IMR-90 (cell line): ENCODE measurements at regions of chr7 and their contacts with region 1.

Region 1: DNA sequence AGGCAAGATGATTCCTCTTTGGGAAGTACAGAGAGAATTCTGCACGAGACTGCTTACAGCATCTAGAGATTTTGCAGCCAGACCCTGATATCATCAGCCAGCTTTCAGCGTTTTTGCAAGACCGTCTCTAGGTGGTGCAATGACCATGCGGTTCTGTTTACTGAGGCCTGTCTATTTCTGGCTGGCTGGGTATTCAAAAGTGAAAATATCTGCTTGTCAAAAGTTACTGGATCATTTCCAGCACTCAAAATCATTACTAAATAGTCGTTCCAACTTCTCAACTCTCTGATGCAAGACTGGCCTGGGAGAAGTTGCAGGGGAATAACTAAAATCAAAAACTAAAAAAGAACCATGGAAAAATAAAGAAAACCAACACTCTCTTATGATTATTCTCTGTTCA is 240.1 kb downstream of the ELMO1 start:
- DNase-seq: peak; percentile 62
- ATAC-seq: peak; percentile 83
- H3K4me3 ChIP-seq: no peak overlapping the region
- H3K27ac ChIP-seq: no peak overlapping the region
- H3K4me1 ChIP-seq: peaks cover 2% of the 10 kb centered on the region; the same call in 1 of the 2 replicates
- H3K27me3 ChIP-seq: no peaks in the 10 kb centered on the region
- CTCF ChIP-seq: peak; percentile 52
- POLR2A ChIP-seq: no peak
- RAD21 ChIP-seq: peak; percentile 61

Region 2: DNA sequence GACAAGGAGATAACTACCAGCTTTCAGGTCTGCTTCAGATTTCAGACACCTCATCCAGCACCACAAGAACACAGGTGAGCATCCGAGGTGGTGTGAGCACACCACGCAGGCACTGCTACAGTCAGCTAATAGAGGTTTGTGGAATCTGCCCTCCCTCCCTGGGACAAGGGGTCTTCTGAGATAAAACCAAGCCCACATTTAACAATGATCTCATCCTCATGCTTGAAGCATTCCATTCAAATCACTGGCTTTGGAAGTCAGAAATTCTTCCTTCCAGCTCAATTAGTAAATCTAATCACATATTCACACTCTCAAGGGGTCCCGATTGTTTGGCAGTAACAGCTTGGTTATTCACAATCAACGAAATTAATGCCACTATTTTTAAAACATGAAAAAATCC is 91.2 kb before region 1 on chr7:
- CTCF ChIA-PET with region 1: no interaction called
- POLR2A ChIA-PET with region 1: no interaction called
- dilution Hi-C with region 1: no loop called
- in situ Hi-C with region 1: no loop called
- intact Hi-C with region 1: no loop called
- DNase-seq: no peak
- ATAC-seq: peak; percentile 24; the same call in 1 of the 2 replicates
- H3K4me3 ChIP-seq: no peak overlapping the region
- H3K27ac ChIP-seq: no peak overlapping the region
- H3K4me1 ChIP-seq: 0 out of 2 replicates have a peak, but pooled peaks cover 4% of the 10 kb centered on the region
- H3K27me3 ChIP-seq: no peaks in the 10 kb centered on the region
- CTCF ChIP-seq: no peak
- POLR2A ChIP-seq: no peak
- RAD21 ChIP-seq: no peak

Region 3: DNA sequence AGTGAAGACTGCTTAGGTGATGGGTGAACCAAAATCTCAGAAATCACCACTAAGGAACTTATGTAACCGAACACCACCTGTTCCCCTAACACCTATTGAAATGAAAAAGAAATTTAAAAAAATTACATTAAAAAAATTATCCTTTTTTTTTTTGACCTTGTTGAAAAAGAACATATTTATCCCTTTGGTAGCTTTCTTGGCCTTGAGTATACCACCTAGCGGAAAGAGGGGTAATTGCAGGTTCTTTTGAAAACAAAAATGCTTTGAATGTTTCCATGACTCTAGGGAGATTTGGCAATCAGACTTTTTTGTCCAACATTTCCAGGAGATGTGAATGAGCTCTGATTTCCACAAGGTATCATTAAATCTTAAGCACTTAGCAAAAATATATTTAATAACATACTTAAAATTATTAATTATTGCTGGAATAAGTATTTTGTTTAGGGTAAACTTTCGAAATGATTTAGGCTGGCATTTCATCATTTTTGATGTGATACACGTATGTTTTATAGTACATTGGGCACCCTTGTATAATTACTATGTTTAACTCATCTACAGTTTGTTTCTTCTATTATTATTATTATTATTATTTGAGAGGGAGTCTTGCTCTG is 287.2 kb after region 1 on chr7:
- CTCF ChIA-PET with region 1: interaction called, 5 read pairs
- POLR2A ChIA-PET with region 1: no interaction called
- dilution Hi-C with region 1: no loop called
- in situ Hi-C with region 1: no loop called
- intact Hi-C with region 1: loop called (anchors 2 kb)
- DNase-seq: peak; percentile 13
- ATAC-seq: no peak
- H3K4me3 ChIP-seq: no peak overlapping the region
- H3K27ac ChIP-seq: no peak overlapping the region
- H3K4me1 ChIP-seq: no peaks in the 10 kb centered on the region
- H3K27me3 ChIP-seq: no peaks in the 10 kb centered on the region
- CTCF ChIP-seq: peak; percentile 52
- POLR2A ChIP-seq: no peak
- RAD21 ChIP-seq: no peak

Region 4: DNA sequence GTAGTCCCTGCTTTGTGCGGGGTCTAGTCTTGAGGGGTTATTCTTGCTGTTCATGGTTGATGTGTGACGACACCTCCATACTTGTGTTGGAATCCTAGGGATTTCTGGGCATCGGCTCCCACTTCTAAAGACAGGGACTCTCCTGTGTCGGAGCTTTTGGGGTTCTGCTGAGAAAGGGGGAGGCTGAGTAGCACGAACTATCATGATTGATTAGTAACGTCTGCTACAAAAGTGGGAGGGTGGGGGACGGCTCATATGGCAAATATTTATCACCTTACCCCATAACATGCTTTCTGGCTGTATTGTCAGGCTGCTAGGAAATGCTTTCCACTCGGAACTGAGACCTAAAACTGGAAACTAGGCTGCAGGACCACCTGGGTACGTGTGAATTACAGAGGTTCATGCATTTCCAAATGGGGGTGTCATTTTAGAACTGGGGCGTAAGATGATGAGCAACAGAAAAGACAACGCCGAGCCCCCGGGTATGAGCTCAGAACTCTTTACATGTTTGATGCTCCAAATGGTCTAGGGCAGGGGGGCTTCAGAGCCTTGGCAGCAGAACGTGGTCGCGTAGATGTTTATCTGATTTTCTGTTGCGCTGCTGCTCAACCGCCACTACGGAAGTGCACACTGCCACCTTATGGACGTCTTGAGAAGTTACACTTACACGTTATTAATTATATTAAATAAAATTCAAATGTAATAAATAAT is 624.7 kb after region 1 on chr7:
- CTCF ChIA-PET with region 1: no interaction called
- POLR2A ChIA-PET with region 1: no interaction called
- dilution Hi-C with region 1: no loop called
- in situ Hi-C with region 1: loop called (anchors 25 kb)
- intact Hi-C with region 1: loop called (anchors 1 kb)
- DNase-seq: peak; percentile 35
- ATAC-seq: no peak
- H3K4me3 ChIP-seq: no peak overlapping the region
- H3K27ac ChIP-seq: no peak overlapping the region
- H3K4me1 ChIP-seq: no peaks in the 10 kb centered on the region
- H3K27me3 ChIP-seq: no peaks in the 10 kb centered on the region
- CTCF ChIP-seq: peak; percentile 59
- POLR2A ChIP-seq: no peak
- RAD21 ChIP-seq: peak; percentile 31; the same call in 1 of the 2 replicates